HEK293 (cell line): ENCODE measurements at regions of chr18 and their contacts with region 1.

Region 1: GRCh38 chr18:34787931-34788532 is 77.9 kb downstream of the DTNA start:
- H3K4me3 ChIP-seq: no peak overlapping the region
- H3K27ac ChIP-seq: no peak overlapping the region
- H3K4me1 ChIP-seq: no peaks in the 10 kb centered on the region
- CTCF ChIP-seq: peak; percentile 57

Region 2: GRCh38 chr18:34595673-34596303 is 192.2 kb before region 1 on chr18:
- CTCF ChIA-PET with region 1: interaction called, 11 read pairs
- POLR2A ChIA-PET with region 1: no interaction called
- H3K4me3 ChIP-seq: no peak overlapping the region
- H3K27ac ChIP-seq: no peak overlapping the region
- H3K4me1 ChIP-seq: no peaks in the 10 kb centered on the region
- CTCF ChIP-seq: peak; percentile 29; the same call in 1 of the 2 replicates

Region 3: GRCh38 chr18:34821749-34822148 is 33.7 kb after region 1 on chr18:
- CTCF ChIA-PET with region 1: no interaction called
- POLR2A ChIA-PET with region 1: no interaction called
- H3K4me3 ChIP-seq: no peak overlapping the region
- H3K27ac ChIP-seq: no peak overlapping the region
- H3K4me1 ChIP-seq: no peaks in the 10 kb centered on the region
- CTCF ChIP-seq: no peak